HCT116 (cell line): ENCODE measurements at regions of chr17 and their contacts with region 1.

Region 1: GRCh38 chr17:76612977-76613851 is 27.6 kb upstream of the ST6GALNAC2 start:
- DNase-seq: peak; percentile 99
- ATAC-seq: peak; percentile 99
- H3K4me3 ChIP-seq: peak overlapping the region in 1 of 2 experiments; percentile 9; a peak in 1 of 4 replicates
- H3K27ac ChIP-seq: peak overlapping the region; percentile 43
- H3K4me1 ChIP-seq: peaks cover 16 to 29% of the 10 kb centered on the region in 2 experiments; a peak in 3 of 4 replicates
- H3K27me3 ChIP-seq: no peaks in the 10 kb centered on the region
- CTCF ChIP-seq: peak; percentile 62 to 99 (median 72)
- POLR2A ChIP-seq: no peak
- RAD21 ChIP-seq: peak; percentile 96

Region 2: DNA sequence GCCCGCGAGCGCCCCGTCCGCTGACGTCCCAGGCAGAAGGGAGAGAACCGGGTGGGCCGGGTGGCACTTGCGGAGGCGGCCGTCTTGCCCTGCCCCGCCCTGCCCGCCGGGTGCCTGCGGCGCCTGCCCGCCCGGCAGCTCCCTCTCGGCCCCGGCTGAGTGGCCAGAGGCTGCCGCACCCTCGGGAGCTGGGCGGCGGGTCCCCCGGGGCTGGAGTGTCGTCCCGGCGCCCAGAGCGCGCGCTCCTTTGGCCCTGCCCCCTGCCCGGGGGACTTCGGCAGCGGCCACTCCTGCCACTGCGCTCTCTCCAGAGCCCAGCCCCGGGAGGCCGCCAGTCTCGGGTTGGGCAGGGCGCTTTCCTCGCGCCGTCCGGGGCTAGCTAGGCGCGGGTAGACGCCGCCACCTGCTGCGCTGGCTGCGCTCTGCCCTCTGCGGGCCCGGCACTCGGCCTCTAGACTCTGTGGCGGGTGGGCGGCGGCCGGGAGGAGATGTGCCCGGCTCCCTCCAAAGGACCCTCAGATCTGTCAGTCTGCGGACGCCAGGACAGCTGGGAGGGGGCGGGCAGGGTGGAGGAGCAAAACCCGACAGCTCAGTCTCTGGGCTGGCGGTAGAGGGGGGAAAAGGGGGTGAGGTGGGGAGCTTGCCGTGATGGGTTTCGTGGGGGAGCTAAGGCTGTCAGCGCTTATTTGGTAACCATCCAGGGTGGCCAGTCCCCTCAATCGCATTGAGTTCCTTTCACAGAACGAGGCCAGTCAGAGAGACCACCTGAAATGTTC is 27.2 kb before region 1 on chr17 and contains the start of gene ST6GALNAC2:
- CTCF ChIA-PET with region 1: interaction called, 4 read pairs
- POLR2A ChIA-PET with region 1: interaction called, 10 read pairs
- RAD21 ChIA-PET with region 1: no interaction called
- intact Hi-C with region 1: no loop called
- DNase-seq: peak; percentile 42
- ATAC-seq: peak; percentile 89
- H3K4me3 ChIP-seq: peak within 1 kb of the TSS; percentile 68 to 87
- H3K27ac ChIP-seq: peak within 1 kb of the TSS; percentile 80
- H3K4me1 ChIP-seq: peaks cover 17 to 40% of the 10 kb centered on the region in 2 experiments
- H3K27me3 ChIP-seq: no peaks in the 10 kb centered on the region
- CTCF ChIP-seq: peak in 2 of 3 experiments; percentile 12 to 23; a peak in 1 of 6 replicates
- POLR2A ChIP-seq: no peak
- RAD21 ChIP-seq: peak; percentile 59
- total RNA-seq, gene ST6GALNAC2: 14.7 TPM

Region 3: DNA sequence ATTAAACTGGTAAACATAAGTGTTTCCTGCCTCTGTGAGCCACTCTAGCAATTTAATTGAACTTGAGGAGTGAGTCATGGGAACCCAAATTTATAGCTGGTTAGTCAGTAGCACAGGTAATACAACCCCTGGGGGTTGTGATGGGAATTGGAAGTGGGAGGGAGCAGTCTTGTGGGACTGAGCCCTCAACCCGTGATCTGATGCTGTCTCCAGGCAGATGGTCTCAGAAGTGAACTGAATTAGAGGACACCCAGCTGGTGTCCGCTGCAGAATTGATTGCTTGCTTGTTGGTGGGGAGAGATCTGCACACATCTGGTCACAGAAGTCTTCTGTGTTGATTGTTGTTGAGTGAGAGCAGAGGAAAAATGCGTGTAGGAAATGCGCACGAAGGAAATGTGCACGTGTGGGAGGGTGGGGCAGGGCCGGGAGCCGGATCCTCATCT is 19.8 kb before region 1 on chr17:
- CTCF ChIA-PET with region 1: interaction called, 3 read pairs
- POLR2A ChIA-PET with region 1: interaction called, 13 read pairs
- RAD21 ChIA-PET with region 1: no interaction called
- intact Hi-C with region 1: no loop called
- DNase-seq: peak; percentile 74
- ATAC-seq: peak; percentile 93
- H3K4me3 ChIP-seq: peak overlapping the region in 1 of 2 experiments; percentile 14; a peak in 1 of 4 replicates
- H3K27ac ChIP-seq: no peak overlapping the region; the same call in 1 of the 2 replicates
- H3K4me1 ChIP-seq: peaks cover 22 to 39% of the 10 kb centered on the region in 2 experiments
- H3K27me3 ChIP-seq: no peaks in the 10 kb centered on the region
- CTCF ChIP-seq: peak in 2 of 3 experiments; percentile 31 to 38; a peak in 3 of 6 replicates
- POLR2A ChIP-seq: no peak
- RAD21 ChIP-seq: peak; percentile 19; the same call in 1 of the 2 replicates

Region 4: DNA sequence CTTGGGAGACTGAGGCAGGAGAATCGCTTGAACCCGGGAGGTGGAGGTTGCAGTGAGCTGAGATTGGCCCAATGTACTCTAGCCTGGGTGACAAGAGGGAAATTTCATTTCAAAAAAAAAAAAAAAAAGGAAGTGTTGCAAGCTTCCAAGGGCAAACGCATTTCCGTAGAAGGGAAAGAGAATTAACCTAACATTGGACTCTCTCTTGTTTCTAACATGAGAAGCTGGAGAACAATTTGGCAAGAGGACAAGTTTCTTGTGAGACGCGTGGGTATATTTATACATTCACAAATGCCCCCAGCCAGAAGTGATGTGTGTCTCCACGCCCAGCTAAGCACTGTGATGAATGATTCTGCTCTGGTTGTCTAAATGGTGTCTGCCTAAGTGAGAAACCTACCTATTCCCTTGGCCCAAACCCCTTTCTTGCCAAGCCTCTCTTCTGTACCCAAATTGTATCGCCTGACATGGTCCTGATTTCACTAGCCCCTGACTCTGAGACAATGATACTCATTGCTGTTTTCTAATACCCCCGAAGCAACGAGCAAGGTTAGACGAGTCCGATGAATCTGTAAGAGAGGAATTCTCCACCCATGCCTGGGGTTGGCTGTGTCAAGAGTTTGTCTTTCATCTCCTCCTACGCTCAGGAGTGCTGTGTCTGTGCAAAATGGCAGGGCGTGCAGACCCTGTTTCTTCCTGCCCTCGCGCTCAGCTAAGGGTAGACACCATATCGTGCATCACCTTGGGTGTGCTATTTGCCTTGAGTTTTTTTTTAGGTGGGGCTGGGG is 13.3 kb before region 1 on chr17:
- CTCF ChIA-PET with region 1: interaction called, 5 read pairs
- POLR2A ChIA-PET with region 1: interaction called, 25 read pairs
- RAD21 ChIA-PET with region 1: no interaction called
- intact Hi-C with region 1: no loop called
- DNase-seq: no peak
- ATAC-seq: no peak
- H3K4me3 ChIP-seq: no peak overlapping the region
- H3K27ac ChIP-seq: no peak overlapping the region
- H3K4me1 ChIP-seq: peaks cover 37 to 63% of the 10 kb centered on the region in 2 experiments
- H3K27me3 ChIP-seq: no peaks in the 10 kb centered on the region
- CTCF ChIP-seq: no peak
- POLR2A ChIP-seq: no peak
- RAD21 ChIP-seq: no peak